PC-3 (cell line): ENCODE measurements at regions of chr10 and their contacts with region 1.

Region 1: GRCh38 chr10:93496322-93497041 is at the start of gene CEP55:
- DNase-seq: peak; percentile 93
- ATAC-seq: peak; percentile 98
- H3K4me3 ChIP-seq: peak within 1 kb of the TSS; percentile 98
- H3K27ac ChIP-seq: peak within 1 kb of the TSS; percentile 67
- H3K4me1 ChIP-seq: peaks cover 12% of the 10 kb centered on the region; the same call in 1 of the 2 replicates
- H3K27me3 ChIP-seq: no peaks in the 10 kb centered on the region
- CTCF ChIP-seq: no peak
- total RNA-seq, gene CEP55: 62.6 and 63.6 TPM in 2 replicates

Region 2: GRCh38 chr10:93670372-93670771 is 173.9 kb after region 1 on chr10:
- CTCF ChIA-PET with region 1: interaction called, 10 read pairs
- POLR2A ChIA-PET with region 1: no interaction called
- intact Hi-C with region 1: no loop called
- DNase-seq: no peak
- ATAC-seq: no peak
- H3K4me3 ChIP-seq: no peak overlapping the region
- H3K27ac ChIP-seq: no peak overlapping the region
- H3K4me1 ChIP-seq: no peaks in the 10 kb centered on the region
- H3K27me3 ChIP-seq: no peaks in the 10 kb centered on the region
- CTCF ChIP-seq: no peak